Activated CD4-positive, alpha-beta memory T cell treated with anti-CD3 and anti-CD28 coated beads, Interleukin-2, amount 10 ng/mL, durations not matched to agents 7 days and 5 days (primary cell): ENCODE measurements at regions of chr17 and their contacts with region 1.

Region 1: GRCh38 chr17:58249270-58250133 is 11.1 kb downstream of the LPO start:
- DNase-seq: peak; percentile 73
- H3K4me3 Mint-ChIP-seq: peak overlapping the region; percentile 71
- H3K27ac Mint-ChIP-seq: no peak overlapping the region
- H3K4me1 Mint-ChIP-seq: peaks cover 19% of the 10 kb centered on the region
- H3K27me3 Mint-ChIP-seq: peaks cover 49% of the 10 kb centered on the region

Region 2: DNA sequence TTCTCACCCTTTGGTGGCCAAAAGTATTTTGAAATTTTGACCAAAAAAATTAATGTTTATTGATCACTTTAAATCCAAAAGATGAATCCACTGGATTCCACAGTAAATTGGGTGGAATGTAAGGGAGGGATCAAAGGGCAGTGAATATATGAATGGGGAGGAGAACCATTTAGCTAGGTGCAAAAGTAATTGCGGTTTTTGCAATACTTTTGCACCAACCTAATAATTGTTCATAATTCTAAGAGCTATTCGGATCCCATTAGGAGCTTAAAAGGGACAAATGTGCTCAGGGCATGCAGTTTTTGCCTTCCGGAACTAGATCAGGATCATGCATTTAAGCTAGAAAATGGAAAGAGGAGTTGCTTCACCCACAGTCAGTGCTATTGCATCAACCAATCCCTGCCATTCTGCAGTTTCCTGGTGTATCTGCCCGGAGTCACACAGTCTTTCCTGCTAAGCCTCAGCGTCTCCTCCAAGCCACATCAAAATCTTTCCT is 11.3 kb before region 1 on chr17 and contains the start of gene LPO:
- CTCF ChIA-PET with region 1: interaction called, 28 read pairs
- POLR2A ChIA-PET with region 1: interaction called, 3 read pairs
- DNase-seq: no peak
- H3K4me3 Mint-ChIP-seq: no peak within 1 kb of the TSS
- H3K27ac Mint-ChIP-seq: no peak within 1 kb of the TSS
- H3K4me1 Mint-ChIP-seq: no peaks in the 10 kb centered on the region
- H3K27me3 Mint-ChIP-seq: peaks cover 69% of the 10 kb centered on the region
- total RNA-seq, gene LPO: not detected

Region 3: DNA sequence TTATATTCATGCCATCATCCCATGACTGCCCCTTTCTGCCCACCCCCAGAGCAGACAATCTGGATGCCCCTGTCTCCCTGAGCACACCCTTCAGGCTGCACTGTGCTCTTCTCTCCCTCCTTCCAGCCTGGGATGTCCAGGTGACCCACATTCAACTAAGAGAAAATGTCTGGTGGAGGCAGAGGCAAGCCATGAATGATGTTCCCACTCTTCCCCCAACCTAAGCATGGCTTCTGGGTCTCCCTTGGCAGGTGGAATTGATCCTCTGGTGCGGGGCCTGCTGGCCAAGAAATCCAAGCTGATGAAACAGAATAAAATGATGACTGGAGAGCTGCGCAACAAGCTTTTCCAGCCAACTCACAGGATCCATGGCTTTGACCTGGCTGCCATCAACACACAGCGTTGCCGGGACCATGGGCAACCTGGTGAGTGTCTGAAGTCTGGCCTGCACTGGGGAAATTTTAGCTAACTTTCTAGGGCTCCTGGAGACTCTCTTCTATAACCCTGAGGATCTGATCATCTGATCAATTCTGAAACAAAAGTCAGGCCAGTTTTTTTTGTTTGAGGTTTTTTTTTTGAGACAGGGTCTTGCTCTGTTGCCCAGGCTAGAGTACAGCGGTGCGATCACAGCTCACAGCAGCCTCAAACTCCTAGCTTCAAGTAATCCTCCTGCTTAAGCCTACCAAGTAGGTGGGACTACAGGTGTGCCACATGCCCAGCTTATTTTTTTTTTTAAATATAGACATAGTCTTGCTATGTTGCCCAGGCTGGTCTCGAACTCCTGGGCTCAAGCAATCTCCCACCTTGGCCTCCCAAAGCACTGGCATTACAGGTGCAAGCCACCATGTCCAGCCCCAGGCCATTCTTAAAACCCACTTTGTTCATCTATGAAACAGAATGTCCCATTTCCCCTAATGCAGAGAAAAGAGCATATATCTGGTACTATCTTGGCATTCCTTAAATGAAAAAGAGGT is 16.7 kb after region 1 on chr17:
- CTCF ChIA-PET with region 1: interaction called, 10 read pairs
- POLR2A ChIA-PET with region 1: no interaction called
- DNase-seq: no peak
- H3K4me3 Mint-ChIP-seq: no peak overlapping the region
- H3K27ac Mint-ChIP-seq: no peak overlapping the region
- H3K4me1 Mint-ChIP-seq: no peaks in the 10 kb centered on the region
- H3K27me3 Mint-ChIP-seq: peaks cover 42% of the 10 kb centered on the region